Mammary epithelial cell (primary cell): ENCODE measurements at regions of chr6 and their contacts with region 1.

Region 1: GRCh38 chr6:36360241-36361054 is 23.8 kb upstream of the BNIP5 start:
- DNase-seq: peak; percentile 47
- H3K4me3 ChIP-seq: no peak overlapping the region
- H3K27ac ChIP-seq: no peak overlapping the region
- H3K4me1 ChIP-seq: no peaks in the 10 kb centered on the region
- H3K27me3 ChIP-seq: no peaks in the 10 kb centered on the region
- CTCF ChIP-seq: peak; percentile 78 to 85

Region 2: GRCh38 chr6:36027501-36028087 is 332.9 kb before region 1 on chr6 and contains the start of gene MAPK14:
- CTCF ChIA-PET with region 1: interaction called, 6 read pairs
- dilution Hi-C with region 1: no loop called
- in situ Hi-C with region 1: no loop called
- intact Hi-C with region 1: loop called (anchors 1 kb)
- DNase-seq: peak; percentile 99
- H3K4me3 ChIP-seq: peak within 1 kb of the TSS; percentile 65 to 100 (median 98)
- H3K27ac ChIP-seq: peak within 1 kb of the TSS; percentile 91
- H3K4me1 ChIP-seq: peaks cover 5% of the 10 kb centered on the region
- H3K27me3 ChIP-seq: no peaks in the 10 kb centered on the region
- CTCF ChIP-seq: peak; percentile 74 to 96
- total RNA-seq, gene MAPK14: 44.4 to 66.8 TPM

Region 3: DNA sequence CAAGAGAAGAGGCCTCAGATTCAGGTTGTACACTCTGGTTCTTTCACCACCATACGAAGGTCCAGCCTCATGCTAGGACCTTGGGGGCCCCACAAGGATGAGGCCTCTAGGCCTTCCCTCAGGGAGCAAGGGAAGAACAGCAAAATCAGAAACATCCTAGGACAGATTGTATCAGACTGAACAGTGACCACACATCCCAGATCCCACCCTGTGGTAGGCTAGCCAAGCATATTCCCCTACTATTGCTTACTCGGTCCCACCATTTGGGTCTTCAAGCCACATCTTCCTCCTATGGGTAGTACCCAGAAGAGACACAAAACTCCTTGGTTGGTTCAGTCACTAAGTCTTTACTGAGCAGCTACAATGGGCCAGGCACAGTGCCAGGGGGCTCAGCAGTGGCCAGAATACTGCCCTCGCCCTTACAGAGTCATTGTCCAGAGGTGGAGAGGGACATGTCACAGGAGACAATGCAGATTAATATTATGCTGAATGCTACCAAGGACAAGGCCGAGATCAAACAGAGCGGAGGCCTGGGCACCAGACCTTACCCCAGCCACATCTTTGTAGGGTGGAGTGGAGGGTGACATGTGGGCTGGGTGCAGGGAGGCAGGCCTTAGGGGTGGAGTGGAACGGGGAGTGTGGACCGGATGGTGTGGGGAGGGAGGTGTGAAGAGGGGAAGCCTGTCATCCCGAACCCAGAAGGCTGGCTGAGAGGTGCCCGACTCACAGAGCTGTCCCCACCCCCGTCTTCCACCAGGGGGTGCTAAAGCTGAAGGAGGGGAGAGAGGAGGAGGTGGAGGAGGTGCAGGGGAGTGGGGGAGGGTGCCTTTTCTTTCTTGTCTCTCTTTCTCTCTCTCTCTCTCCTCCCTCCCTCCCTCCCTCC is 236.9 kb before region 1 on chr6:
- CTCF ChIA-PET with region 1: no interaction called
- dilution Hi-C with region 1: no loop called
- in situ Hi-C with region 1: loop called (anchors 5 kb)
- intact Hi-C with region 1: loop called (anchors 1 kb)
- DNase-seq: peak; percentile 64
- H3K4me3 ChIP-seq: no peak overlapping the region
- H3K27ac ChIP-seq: no peak overlapping the region
- H3K4me1 ChIP-seq: peaks cover 15% of the 10 kb centered on the region
- H3K27me3 ChIP-seq: no peaks in the 10 kb centered on the region
- CTCF ChIP-seq: peak; percentile 68 to 87

Region 4: DNA sequence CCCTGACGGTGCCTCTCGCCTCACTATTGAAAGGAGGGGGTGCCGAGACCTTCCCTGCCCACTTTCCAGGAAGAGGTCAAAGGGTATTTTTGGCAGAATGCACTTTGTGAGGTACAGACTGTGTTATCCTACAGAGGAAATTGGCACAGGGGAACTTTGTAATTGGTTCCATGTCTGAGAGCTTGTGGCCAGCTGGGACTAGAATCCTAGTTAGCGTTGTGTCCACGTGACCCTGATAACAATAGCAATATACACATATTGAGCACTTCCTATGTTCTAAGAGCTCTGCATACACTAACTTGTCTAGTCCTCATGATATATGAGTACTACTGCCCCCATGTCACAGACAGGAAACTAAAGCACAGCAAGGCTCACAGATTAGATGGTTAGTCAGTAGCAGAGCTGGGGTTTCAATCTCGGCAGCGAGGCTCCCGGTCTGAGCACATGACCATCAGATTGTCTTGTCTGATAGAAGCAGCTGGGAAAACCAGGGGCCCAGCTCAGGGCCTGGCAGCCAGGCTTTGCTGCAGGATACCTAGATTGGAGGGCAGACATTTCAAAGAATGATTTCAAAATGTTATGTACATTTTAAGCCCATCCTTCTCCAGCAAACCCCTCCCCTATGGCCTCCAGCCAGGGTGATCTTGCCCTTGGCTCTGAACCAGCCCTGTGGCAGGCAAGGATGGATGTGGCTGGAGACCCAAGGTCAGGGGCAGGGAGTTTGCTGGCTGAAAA is 228.8 kb before region 1 on chr6:
- CTCF ChIA-PET with region 1: no interaction called
- dilution Hi-C with region 1: no loop called
- in situ Hi-C with region 1: loop called in 1 of 2 experiments (anchors 5 kb)
- intact Hi-C with region 1: no loop called
- DNase-seq: no peak
- H3K4me3 ChIP-seq: no peak overlapping the region
- H3K27ac ChIP-seq: no peak overlapping the region
- H3K4me1 ChIP-seq: peaks cover 23% of the 10 kb centered on the region
- H3K27me3 ChIP-seq: no peaks in the 10 kb centered on the region
- CTCF ChIP-seq: no peak

Region 5: GRCh38 chr6:36196880-36197548 is 163.4 kb before region 1 on chr6:
- CTCF ChIA-PET with region 1: no interaction called
- dilution Hi-C with region 1: no loop called
- in situ Hi-C with region 1: no loop called
- intact Hi-C with region 1: loop called (anchors 2 kb)
- DNase-seq: peak; percentile 92
- H3K4me3 ChIP-seq: peak overlapping the region; percentile 57 to 84 (median 59)
- H3K27ac ChIP-seq: no peak overlapping the region
- H3K4me1 ChIP-seq: peaks cover 8% of the 10 kb centered on the region
- H3K27me3 ChIP-seq: no peaks in the 10 kb centered on the region
- CTCF ChIP-seq: no peak

Region 6: DNA sequence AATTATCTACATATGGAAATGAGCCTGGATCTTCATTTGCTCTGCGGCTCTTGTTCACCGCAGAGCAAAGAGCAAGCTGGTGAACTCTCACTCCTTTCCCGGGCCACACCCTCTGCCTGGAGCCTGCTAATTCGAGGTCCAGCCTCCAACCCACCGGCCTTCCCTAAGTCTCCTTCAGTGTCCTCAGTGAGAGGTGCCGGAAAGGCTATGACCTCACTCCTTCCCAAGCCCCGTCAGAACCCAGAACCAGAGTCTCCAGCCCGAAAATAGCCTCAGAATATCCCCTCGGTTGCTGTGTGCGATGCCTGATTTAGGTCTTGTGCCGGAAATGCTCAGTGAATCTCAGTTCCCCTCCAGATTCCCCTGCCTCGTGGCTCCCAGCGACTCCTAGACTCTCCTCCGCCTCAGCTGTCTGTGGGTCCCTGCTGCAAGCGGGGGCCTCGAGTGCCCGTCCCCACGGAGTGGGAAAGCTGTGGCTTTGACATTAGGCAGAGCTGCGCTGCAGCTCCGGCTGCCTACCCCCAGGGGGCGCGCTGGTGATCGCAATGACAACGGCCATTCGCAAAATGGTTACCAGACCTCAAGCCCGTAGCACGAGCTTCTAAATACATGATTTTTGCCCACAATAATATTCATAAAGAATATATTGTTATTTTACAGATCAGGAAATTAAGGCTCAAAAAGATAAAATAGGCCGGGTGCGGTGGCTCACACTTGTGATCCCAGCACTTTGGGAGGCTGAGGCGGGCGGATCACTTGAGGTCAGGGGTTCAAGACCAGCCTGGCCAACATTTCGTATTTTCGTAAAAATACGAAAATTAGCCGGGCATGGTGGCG is 19.6 kb before region 1 on chr6:
- CTCF ChIA-PET with region 1: interaction called, 10 read pairs
- dilution Hi-C with region 1: no loop called
- in situ Hi-C with region 1: no loop called
- intact Hi-C with region 1: loop called (anchors 1 kb)
- DNase-seq: peak; percentile 24
- H3K4me3 ChIP-seq: no peak overlapping the region
- H3K27ac ChIP-seq: no peak overlapping the region
- H3K4me1 ChIP-seq: peaks cover 3% of the 10 kb centered on the region
- H3K27me3 ChIP-seq: peaks cover 4% of the 10 kb centered on the region
- CTCF ChIP-seq: peak; percentile 92 to 96

Region 7: DNA sequence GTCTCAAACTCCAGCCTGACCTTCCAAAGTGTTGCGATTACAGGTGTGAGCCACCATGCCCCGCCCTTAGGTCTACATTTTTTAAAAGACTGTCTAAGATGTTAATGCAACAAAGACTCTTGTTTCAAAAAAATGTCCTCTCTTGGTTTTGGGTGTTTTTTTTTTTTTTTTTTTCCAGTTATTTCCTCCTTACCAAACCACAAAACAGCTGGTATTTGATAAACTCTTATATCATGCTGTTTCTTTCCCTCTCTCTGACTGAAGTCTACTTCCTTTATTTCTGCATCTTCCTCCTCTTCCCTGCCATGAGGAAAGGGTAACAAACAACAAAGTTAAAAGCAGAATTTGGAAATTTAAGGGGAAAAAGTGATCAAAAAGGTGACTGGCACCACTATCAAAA is 165.6 kb after region 1 on chr6:
- CTCF ChIA-PET with region 1: no interaction called
- dilution Hi-C with region 1: no loop called
- in situ Hi-C with region 1: no loop called
- intact Hi-C with region 1: no loop called
- DNase-seq: no peak
- H3K4me3 ChIP-seq: no peak overlapping the region
- H3K27ac ChIP-seq: no peak overlapping the region
- H3K4me1 ChIP-seq: peaks cover 13% of the 10 kb centered on the region
- H3K27me3 ChIP-seq: no peaks in the 10 kb centered on the region
- CTCF ChIP-seq: no peak